Natural killer cell (primary cell): ENCODE measurements at regions of chr15 and their contacts with region 1.

Region 1: DNA sequence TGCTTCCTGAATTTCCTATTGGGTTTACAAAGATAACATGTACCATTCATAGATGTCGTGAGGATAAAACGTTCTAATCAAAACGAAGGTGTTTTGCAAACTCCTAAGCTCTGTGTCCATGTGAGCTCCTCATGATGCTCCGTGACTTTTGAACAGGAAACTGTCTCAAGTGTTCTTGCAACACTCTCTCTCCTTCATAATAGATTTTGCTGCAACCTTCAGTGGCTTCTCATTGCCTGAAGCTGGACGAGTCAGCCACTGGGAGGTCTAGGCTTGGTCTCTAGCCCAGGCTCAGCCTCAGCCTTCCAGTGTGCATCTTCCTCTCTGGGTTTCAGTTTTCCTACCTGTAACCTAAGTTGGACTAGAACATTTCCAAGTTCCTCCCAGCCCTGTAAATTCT is 18.7 kb upstream of the BCL2A1 start:
- DNase-seq: no peak
- ATAC-seq: peak in 1 of 3 donors; percentile 39
- H3K4me3 ChIP-seq: no peak overlapping the region
- H3K4me3 Mint-ChIP-seq: no peak overlapping the region
- H3K27ac ChIP-seq: no peak overlapping the region
- H3K27ac Mint-ChIP-seq: no peak overlapping the region
- H3K4me1 ChIP-seq: peaks cover 7% of the 10 kb centered on the region
- H3K4me1 Mint-ChIP-seq: peaks cover 0 to 6% of the 10 kb centered on the region in 2 donors
- H3K27me3 ChIP-seq: no peaks in the 10 kb centered on the region
- H3K27me3 Mint-ChIP-seq: peaks cover 0 to 6% of the 10 kb centered on the region in 2 donors
- CTCF ChIP-seq: no peak

Region 2: GRCh38 chr15:79853458-79854328 is 136.0 kb before region 1 on chr15:
- intact Hi-C with region 1: loop called (anchors 1 kb)
- DNase-seq: peak; percentile 33 to 80
- ATAC-seq: peak; percentile 92 to 99 (median 99)
- H3K4me3 ChIP-seq: no peak overlapping the region
- H3K4me3 Mint-ChIP-seq: no peak overlapping the region
- H3K27ac ChIP-seq: no peak overlapping the region
- H3K27ac Mint-ChIP-seq: no peak overlapping the region
- H3K4me1 ChIP-seq: no peaks in the 10 kb centered on the region
- H3K4me1 Mint-ChIP-seq: peaks cover 9 to 14% of the 10 kb centered on the region in 2 donors
- H3K27me3 ChIP-seq: no peaks in the 10 kb centered on the region
- H3K27me3 Mint-ChIP-seq: no peaks in the 10 kb centered on the region
- CTCF ChIP-seq: peak; percentile 97

Region 3: DNA sequence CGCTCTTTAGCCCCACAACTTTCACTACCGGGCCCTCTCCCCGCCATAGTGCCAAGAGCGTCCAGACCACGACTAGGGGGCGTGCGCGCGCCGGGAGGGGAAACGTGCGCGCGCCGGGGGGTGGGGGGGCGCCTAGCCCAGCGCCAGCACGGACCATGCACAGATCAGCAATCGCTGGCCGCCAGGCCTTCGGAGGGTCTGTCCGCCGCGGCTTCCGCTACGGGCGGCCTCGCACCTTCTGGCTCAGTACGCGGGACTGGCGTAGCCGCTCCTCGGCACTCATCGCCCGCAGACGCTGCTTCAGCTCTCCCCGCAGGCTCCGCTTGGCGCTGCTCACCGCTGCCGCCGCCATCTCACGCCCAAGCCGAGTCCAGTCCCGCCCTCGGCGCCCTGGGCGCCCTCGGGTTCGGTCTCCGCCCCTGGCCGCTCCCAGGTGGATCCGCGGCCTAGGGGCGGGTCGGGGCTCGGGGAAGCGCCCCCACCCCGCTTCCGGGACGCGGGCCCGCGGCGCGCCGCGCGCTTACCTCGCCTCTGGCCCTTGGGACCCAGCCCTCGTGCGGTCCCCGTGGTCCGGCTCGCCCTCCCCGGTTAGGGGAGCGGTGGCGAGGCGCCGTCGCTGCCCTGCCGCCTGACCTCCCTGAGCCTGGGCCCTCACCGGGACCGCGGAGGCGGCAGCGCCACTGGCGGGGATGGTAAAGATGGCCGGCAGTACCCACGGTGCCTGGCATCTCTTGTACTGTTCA is 92.9 kb before region 1 on chr15 and contains the start of gene MTHFS:
- intact Hi-C with region 1: loop called (anchors 2 kb)
- DNase-seq: peak; percentile 71 to 90
- ATAC-seq: peak; percentile 80 to 92 (median 85)
- H3K4me3 ChIP-seq: peak within 1 kb of the TSS; percentile 54
- H3K4me3 Mint-ChIP-seq: peak within 1 kb of the TSS; percentile 97
- H3K27ac ChIP-seq: peak within 1 kb of the TSS; percentile 93
- H3K27ac Mint-ChIP-seq: peak within 1 kb of the TSS; percentile 95 to 96
- H3K4me1 ChIP-seq: peaks cover 17% of the 10 kb centered on the region
- H3K4me1 Mint-ChIP-seq: peaks cover 17 to 34% of the 10 kb centered on the region in 2 donors
- H3K27me3 ChIP-seq: no peaks in the 10 kb centered on the region
- H3K27me3 Mint-ChIP-seq: no peaks in the 10 kb centered on the region
- CTCF ChIP-seq: peak; percentile 38
- total RNA-seq, gene MTHFS: 7.0 to 10.8 (median 10.5) TPM

Region 4: GRCh38 chr15:80173022-80173759 is 183.5 kb after region 1 on chr15:
- intact Hi-C with region 1: loop called (anchors 2 kb)
- DNase-seq: peak; percentile 60 to 79
- ATAC-seq: peak; percentile 77 to 90 (median 77)
- H3K4me3 ChIP-seq: no peak overlapping the region
- H3K4me3 Mint-ChIP-seq: no peak overlapping the region
- H3K27ac ChIP-seq: no peak overlapping the region
- H3K27ac Mint-ChIP-seq: no peak overlapping the region
- H3K4me1 ChIP-seq: no peaks in the 10 kb centered on the region
- H3K4me1 Mint-ChIP-seq: peaks cover 0 to 12% of the 10 kb centered on the region in 2 donors
- H3K27me3 ChIP-seq: no peaks in the 10 kb centered on the region
- H3K27me3 Mint-ChIP-seq: no peaks in the 10 kb centered on the region
- CTCF ChIP-seq: peak; percentile 70